Lower leg skin (tissue), 4 donors: ENCODE measurements at regions of chr7 and their contacts with region 1.

Region 1: GRCh38 chr7:143416565-143417149 is 8.0 kb upstream of the EPHA1 start:
- DNase-seq: no peak
- H3K4me3 ChIP-seq: no peak overlapping the region
- CTCF ChIP-seq: peak in 1 of 3 donors; percentile 27
- POLR2A ChIP-seq: no peak

Region 2: GRCh38 chr7:143369678-143370651 is 46.7 kb before region 1 on chr7:
- intact Hi-C with region 1: loop called (anchors 2 kb)
- DNase-seq: no peak
- H3K4me3 ChIP-seq: no peak overlapping the region
- CTCF ChIP-seq: no peak
- POLR2A ChIP-seq: no peak

Region 3: DNA sequence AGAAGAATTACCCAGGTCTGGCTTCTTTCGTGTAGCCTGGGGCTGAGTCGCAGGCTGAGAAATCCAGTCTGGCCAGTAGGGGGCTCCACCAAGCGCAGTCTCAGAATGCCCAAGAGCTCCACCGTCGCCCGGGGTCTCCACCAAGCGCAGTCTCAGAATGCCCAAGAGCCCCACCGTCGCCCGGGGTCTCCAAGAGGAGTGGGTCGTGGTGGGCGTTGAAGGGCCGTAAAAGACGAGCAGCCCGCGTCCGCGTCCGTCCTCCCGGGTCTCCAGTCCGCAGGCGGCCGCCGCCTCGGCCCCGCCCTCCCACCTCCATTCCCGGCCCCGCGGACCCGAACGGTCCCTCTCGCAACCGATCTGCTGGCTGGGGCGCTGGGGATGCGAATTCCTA is 36.4 kb before region 1 on chr7:
- intact Hi-C with region 1: no loop called
- DNase-seq: peak; percentile 90 to 98
- H3K4me3 ChIP-seq: peak overlapping the region; percentile 89
- CTCF ChIP-seq: peak in 2 of 3 donors; percentile 32 to 83
- POLR2A ChIP-seq: no peak